Ovary (tissue), 10 donors: ENCODE measurements at regions of chr2 and their contacts with region 1.

Region 1: DNA sequence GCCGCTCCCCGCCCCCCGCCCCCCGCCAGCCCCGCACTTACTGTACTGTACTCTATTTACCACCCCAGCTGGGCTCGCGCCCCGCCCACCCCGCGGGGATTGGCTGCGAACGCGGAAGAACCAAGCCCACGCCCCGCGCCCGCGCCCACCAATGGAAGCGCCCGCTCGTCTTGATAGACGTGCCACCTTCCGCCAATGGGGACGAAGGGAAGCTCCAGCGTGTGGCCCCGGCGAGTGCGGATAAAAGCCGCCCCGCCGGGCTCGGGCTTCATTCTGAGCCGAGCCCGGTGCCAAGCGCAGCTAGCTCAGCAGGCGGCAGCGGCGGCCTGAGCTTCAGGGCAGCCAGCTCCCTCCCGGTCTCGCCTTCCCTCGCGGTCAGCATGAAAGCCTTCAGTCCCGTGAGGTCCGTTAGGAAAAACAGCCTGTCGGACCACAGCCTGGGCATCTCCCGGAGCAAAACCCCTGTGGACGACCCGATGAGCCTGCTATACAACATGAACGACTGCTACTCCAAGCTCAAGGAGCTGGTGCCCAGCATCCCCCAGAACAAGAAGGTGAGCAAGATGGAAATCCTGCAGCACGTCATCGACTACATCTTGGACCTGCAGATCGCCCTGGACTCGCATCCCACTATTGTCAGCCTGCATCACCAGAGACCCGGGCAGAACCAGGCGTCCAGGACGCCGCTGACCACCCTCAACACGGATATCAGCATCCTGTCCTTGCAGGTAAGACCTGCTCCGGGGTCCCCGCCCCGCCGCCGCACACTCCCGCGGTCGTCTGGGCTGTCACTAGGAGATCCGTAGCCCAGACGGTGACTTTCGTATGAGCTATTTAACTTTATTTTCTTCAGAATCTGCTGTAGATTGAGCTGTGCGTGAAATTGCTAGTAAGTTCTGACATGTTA is at the start of gene ID2:
- DNase-seq: peak; percentile 99 to 100 (median 99)
- H3K4me3 ChIP-seq: peak within 1 kb of the TSS; percentile 73
- H3K27ac ChIP-seq: peak within 1 kb of the TSS; percentile 58 to 97
- H3K4me1 ChIP-seq: no peaks in the 10 kb centered on the region
- H3K27me3 ChIP-seq: no peaks in the 10 kb centered on the region
- CTCF ChIP-seq: peak in 2 of 3 donors; percentile 9 to 21
- EP300 ChIP-seq: no peak
- POLR2A ChIP-seq: peak; percentile 99
- total RNA-seq, gene ID2: 68.5 to 897 (median 168) TPM

Region 2: GRCh38 chr2:7097348-7097895 is 1584.6 kb before region 1 on chr2:
- intact Hi-C with region 1: loop called in 1 of 4 experiments (anchors 5 kb)
- DNase-seq: peak; percentile 49 to 85 (median 75)
- H3K4me3 ChIP-seq: no peak overlapping the region
- H3K27ac ChIP-seq: no peak overlapping the region
- H3K4me1 ChIP-seq: peaks cover 2% of the 10 kb centered on the region
- H3K27me3 ChIP-seq: no peaks in the 10 kb centered on the region
- CTCF ChIP-seq: peak; percentile 80 to 88 (median 81)
- EP300 ChIP-seq: no peak
- POLR2A ChIP-seq: no peak

Region 3: DNA sequence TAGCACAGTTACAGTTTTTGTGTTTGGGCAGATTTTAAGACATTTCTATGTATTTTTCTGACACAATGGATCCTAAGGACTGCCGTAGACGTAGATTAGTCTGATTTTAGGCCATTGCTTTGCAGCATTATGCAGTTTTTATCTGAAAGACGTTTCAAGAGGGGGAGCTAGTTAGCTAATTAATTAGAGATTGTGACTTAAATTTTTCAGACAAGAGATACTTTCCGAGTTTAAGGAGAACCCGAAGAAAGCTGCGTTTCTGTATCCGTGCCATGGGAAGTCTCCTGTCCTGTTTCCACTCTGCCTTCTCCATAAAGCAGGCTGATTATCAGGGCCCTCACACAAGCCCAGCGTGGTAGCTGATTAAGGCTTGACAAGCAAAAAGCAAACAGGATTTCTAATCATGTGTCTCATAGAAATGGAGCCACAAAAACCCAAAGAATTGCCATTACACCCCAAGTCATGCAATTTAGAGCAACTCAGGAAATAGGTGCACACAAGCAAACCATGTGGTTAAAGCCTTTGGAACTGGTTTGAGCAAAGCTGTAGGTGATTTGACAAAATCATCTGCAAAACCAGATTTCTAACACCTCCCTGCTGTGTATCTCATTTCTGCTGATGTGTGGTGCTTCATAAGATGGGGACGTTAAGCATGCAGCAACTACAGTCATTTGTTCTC is 956.7 kb before region 1 on chr2:
- intact Hi-C with region 1: loop called in 1 of 4 experiments (anchors 10 kb)
- DNase-seq: peak in 2 of 5 donors; percentile 20 to 22
- H3K4me3 ChIP-seq: no peak overlapping the region
- H3K27ac ChIP-seq: no peak overlapping the region
- H3K4me1 ChIP-seq: peaks cover 2% of the 10 kb centered on the region
- H3K27me3 ChIP-seq: no peaks in the 10 kb centered on the region
- CTCF ChIP-seq: peak in 2 of 3 donors; percentile 13 to 25
- EP300 ChIP-seq: no peak
- POLR2A ChIP-seq: no peak

Region 4: GRCh38 chr2:8148260-8149008 is 533.6 kb before region 1 on chr2:
- intact Hi-C with region 1: loop called in 1 of 4 experiments (anchors 10 kb)
- DNase-seq: no peak
- H3K4me3 ChIP-seq: no peak overlapping the region
- H3K27ac ChIP-seq: no peak overlapping the region
- H3K4me1 ChIP-seq: peaks cover 13% of the 10 kb centered on the region
- H3K27me3 ChIP-seq: no peaks in the 10 kb centered on the region
- CTCF ChIP-seq: no peak
- EP300 ChIP-seq: no peak
- POLR2A ChIP-seq: no peak

Region 5: GRCh38 chr2:8491296-8492027 is 190.6 kb before region 1 on chr2:
- intact Hi-C with region 1: loop called in 2 of 4 experiments (anchors 5 kb)
- DNase-seq: peak in 2 of 5 donors; percentile 56 to 69
- H3K4me3 ChIP-seq: no peak overlapping the region
- H3K27ac ChIP-seq: peak overlapping the region in 1 of 2 donors; percentile 62
- H3K4me1 ChIP-seq: peaks cover 5% of the 10 kb centered on the region
- H3K27me3 ChIP-seq: no peaks in the 10 kb centered on the region
- CTCF ChIP-seq: no peak
- EP300 ChIP-seq: peak; percentile 95
- POLR2A ChIP-seq: peak; percentile 31

Region 6: GRCh38 chr2:8729939-8730338 is 47.9 kb after region 1 on chr2:
- intact Hi-C with region 1: no loop called
- DNase-seq: no peak
- H3K4me3 ChIP-seq: no peak overlapping the region
- H3K27ac ChIP-seq: no peak overlapping the region
- H3K4me1 ChIP-seq: peaks cover 2% of the 10 kb centered on the region
- H3K27me3 ChIP-seq: no peaks in the 10 kb centered on the region
- CTCF ChIP-seq: no peak
- EP300 ChIP-seq: no peak
- POLR2A ChIP-seq: no peak